Ascending aorta (tissue), 2 donors: ENCODE measurements at regions of chr5 and their contacts with region 1.

Region 1: GRCh38 chr5:140547508-140548299 is at the start of gene EIF4EBP3:
- DNase-seq: peak; percentile 87 to 98
- H3K4me3 ChIP-seq: peak within 1 kb of the TSS; percentile 63 to 69
- H3K27ac ChIP-seq: peak within 1 kb of the TSS; percentile 95 to 97
- H3K4me1 ChIP-seq: peaks cover 19 to 22% of the 10 kb centered on the region in 2 donors
- H3K27me3 ChIP-seq: no peaks in the 10 kb centered on the region
- CTCF ChIP-seq: peak; percentile 64 to 94 (median 72)
- total RNA-seq, gene EIF4EBP3: 4.0 TPM

Region 2: GRCh38 chr5:140420226-140420570 is 127.5 kb before region 1 on chr5:
- intact Hi-C with region 1: no loop called
- DNase-seq: no peak
- H3K4me3 ChIP-seq: no peak overlapping the region
- H3K27ac ChIP-seq: no peak overlapping the region
- H3K4me1 ChIP-seq: no peaks in the 10 kb centered on the region
- H3K27me3 ChIP-seq: no peaks in the 10 kb centered on the region
- CTCF ChIP-seq: no peak

Region 3: DNA sequence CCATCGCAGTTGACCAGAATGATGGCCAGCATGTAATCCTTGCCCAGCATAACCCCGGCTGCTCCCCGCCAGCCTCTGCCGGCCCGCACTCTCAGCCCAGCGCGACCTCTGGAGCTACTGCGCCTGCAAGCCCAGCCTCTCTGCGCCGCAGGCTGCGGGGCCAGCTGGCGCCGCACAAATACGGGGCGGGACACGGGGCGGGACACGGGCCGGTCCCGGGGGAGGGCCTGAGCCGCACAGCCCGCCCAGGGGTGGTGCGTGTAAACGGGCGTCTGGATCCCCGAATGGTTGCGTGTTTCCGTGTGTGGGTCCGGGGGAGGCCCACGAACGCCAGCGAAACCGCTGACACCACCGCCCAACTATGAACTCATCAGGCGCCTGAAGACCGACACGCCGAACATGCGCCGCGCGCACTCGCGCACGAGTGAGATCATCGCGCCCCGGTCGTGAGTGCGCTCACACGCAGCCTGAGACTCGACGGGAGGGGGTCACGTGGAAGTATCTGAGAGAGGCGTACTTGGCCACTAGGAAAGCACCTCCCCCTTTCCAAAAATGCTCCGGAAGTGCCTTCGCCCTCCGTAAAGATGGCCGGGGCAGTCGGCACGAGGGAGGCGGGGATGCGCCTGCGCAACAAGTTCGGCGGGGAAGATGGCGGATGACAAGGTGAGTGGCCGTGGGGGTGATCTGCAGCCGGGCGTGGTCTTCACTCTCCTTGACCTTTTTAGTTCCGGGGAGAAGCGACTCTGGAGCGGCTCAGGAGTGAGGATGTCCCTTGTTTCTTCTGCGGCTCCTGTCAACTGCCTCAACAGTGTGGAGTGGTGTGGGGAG is 16.7 kb after region 1 on chr5 and contains the starts of genes APBB3 and SLC35A4:
- intact Hi-C with region 1: loop called (anchors 1 kb)
- DNase-seq: peak; percentile 96 to 99
- H3K4me3 ChIP-seq: peak within 1 kb of the TSS; percentile 88 to 92
- H3K27ac ChIP-seq: peak within 1 kb of the TSS; percentile 92 to 93
- H3K4me1 ChIP-seq: peaks cover 16 to 24% of the 10 kb centered on the region in 2 donors
- H3K27me3 ChIP-seq: no peaks in the 10 kb centered on the region
- CTCF ChIP-seq: no peak
- total RNA-seq, gene APBB3: 47.3 TPM
- total RNA-seq, gene SLC35A4: 46.2 TPM

Region 4: DNA sequence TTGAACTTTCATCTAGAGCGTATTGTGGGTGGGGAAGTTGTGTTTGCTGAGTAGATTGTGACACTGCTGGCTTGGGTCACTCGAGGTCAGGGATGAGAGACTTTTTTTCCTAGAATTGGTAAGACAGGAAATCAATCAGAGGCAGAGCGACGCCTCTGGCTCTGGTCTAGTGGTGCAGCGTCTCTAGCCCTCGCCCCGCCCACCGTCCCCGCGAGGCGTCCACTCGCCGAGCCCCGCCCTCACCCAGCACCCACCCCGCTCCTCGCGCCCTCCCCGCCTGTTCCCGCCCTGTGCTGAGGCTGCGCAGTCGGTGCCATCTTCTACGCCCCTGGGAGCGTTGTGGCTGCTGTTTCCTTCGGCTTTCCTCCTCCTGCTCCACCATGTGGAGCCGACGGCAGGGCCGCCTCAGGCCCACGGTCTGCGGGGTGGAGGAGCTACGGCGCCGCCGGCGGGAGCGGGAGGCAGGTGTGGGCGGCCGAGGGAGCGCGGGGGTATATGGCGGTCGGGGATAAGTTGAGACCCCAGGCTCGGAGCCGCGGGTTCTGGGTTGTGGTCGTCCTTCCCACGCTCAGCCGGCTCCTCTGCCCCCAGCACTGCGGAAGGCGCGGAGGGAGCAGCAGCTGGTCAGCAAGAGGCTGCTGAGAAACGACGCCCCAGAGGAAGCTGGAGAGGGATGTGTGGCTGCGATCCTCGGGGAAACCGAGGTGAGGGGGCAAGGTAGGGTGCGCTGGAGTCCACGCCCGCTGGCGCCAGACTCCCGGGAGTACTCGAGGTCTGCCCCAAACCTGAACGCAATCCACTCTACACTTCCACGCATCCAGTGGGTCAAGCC is 91.7 kb after region 1 on chr5 and contains the start of gene TMCO6:
- intact Hi-C with region 1: loop called (anchors 1 kb)
- DNase-seq: peak; percentile 83 to 98
- H3K4me3 ChIP-seq: peak within 1 kb of the TSS; percentile 61 to 86
- H3K27ac ChIP-seq: peak within 1 kb of the TSS; percentile 85 to 89
- H3K4me1 ChIP-seq: peaks cover 3 to 8% of the 10 kb centered on the region in 2 donors
- H3K27me3 ChIP-seq: no peaks in the 10 kb centered on the region
- CTCF ChIP-seq: peak; percentile 25 to 76 (median 70)
- total RNA-seq, gene TMCO6: 87.7 TPM

Region 5: GRCh38 chr5:140700177-140701144 is 152.8 kb after region 1 on chr5 and contains the start of gene ZMAT2:
- intact Hi-C with region 1: loop called (anchors 5 kb)
- DNase-seq: peak; percentile 90 to 97
- H3K4me3 ChIP-seq: peak within 1 kb of the TSS; percentile 75 to 79
- H3K27ac ChIP-seq: peak within 1 kb of the TSS; percentile 71 to 76
- H3K4me1 ChIP-seq: peaks cover 3 to 14% of the 10 kb centered on the region in 2 donors
- H3K27me3 ChIP-seq: no peaks in the 10 kb centered on the region
- CTCF ChIP-seq: no peak
- total RNA-seq, gene ZMAT2: 15.5 TPM